Mammary epithelial cell (primary cell): ENCODE measurements at regions of chr19 and their contacts with region 1.

Region 1: GRCh38 chr19:49064768-49065611 is at the start of gene NTF4:
- DNase-seq: peak; percentile 51
- H3K4me3 ChIP-seq: peak within 1 kb of the TSS; percentile 55 to 72 (median 67)
- H3K27ac ChIP-seq: peak within 1 kb of the TSS; percentile 37
- H3K4me1 ChIP-seq: peaks cover 21% of the 10 kb centered on the region
- H3K27me3 ChIP-seq: no peaks in the 10 kb centered on the region
- CTCF ChIP-seq: no peak
- total RNA-seq, gene NTF4: 14.8 to 42.8 TPM

Region 2: GRCh38 chr19:49127674-49128544 is 62.9 kb after region 1 on chr19:
- CTCF ChIA-PET with region 1: interaction called, 20 read pairs
- dilution Hi-C with region 1: no loop called
- in situ Hi-C with region 1: no loop called
- intact Hi-C with region 1: no loop called
- DNase-seq: peak; percentile 93
- H3K4me3 ChIP-seq: peak overlapping the region; percentile 40 to 52 (median 49)
- H3K27ac ChIP-seq: no peak overlapping the region
- H3K4me1 ChIP-seq: peaks cover 5% of the 10 kb centered on the region
- H3K27me3 ChIP-seq: no peaks in the 10 kb centered on the region
- CTCF ChIP-seq: peak in 1 of 2 donors; percentile 33